Right ventricle myocardium inferior (tissue), 1 donor: ENCODE measurements at regions of chr1 and their contacts with region 1.

Region 1: GRCh38 chr1:198465201-198466144 is 75.0 kb downstream of the ATP6V1G3 start:
- DNase-seq: no peak
- ATAC-seq: no peak

Region 2: GRCh38 chr1:197902454-197903195 is 562.8 kb before region 1 on chr1 and contains the start of gene C1orf53:
- intact Hi-C with region 1: loop called (anchors 10 kb)
- DNase-seq: peak; percentile 92
- ATAC-seq: peak; percentile 100
- total RNA-seq, gene C1orf53: 4.9 TPM

Region 3: DNA sequence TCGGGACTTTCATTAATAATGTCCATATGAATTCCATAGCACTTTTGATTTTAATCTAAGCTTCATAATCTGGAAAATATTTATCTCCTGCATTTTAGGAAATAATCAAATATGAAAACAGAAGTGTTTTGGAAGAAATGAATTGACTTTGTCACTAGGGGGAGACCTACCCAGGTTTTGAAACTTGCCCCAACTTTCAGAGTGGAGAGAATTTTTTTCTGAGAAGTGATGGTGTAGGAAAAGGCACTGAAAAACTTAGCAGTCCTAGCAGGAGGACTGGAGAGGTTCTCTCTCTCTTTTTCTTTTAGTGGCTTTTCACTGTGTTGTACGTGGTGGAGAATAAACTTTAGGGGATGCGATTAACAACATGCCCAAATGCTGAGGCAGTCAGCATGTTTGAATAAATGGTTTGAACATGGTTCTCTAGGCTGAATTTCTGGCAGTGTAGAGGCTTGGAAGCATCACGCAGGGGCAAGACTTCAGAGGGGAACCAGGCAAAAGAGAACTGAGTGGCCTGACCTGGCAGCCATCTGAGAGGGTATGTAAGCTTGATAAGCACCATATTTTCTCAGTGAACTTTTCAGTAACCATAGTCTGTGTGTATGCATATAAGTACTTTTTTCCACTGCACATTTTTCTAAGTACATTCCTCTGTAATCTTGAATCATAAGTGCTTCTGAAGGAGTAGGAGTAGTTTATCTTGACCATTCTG is 377.0 kb before region 1 on chr1:
- intact Hi-C with region 1: loop called (anchors 2 kb)
- DNase-seq: no peak
- ATAC-seq: no peak

Region 4: DNA sequence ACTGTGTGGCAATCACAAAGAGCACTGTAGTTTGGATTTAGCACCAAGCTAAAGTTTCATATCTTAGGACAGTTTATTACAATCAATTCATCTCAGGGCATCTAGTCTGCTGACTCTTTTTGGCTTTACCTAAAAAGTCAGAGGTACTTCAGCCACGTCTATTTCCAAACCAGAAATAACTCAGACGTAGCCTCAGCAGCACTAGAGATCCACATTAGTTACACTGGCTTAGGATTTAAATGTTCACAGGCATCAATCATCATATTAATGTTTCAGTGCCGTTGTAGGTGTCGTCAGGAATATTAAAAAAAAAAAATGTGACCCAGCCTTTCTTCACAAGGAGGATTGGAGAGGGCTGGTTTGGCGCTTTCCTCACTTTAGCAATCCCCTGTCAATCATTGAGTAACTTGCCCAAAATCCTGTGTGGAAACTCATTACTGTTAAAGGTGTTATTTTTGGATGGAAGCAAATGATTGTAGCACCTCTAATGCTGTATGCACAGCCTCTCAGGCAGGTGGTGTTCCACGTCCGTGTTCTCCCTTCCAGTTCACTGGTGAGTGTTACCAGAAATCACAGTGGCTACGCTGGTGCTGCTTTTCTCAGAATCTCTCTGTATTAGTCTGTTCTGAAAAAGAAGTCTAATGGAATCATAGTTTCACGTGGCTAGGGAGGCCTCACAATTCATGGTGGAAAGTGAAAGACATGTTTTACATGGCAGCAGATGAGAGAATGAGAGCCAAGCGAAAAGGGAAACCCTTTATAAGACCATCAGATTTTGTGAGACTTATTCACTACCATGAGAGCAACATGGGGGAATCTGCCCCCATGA is 263.3 kb before region 1 on chr1:
- intact Hi-C with region 1: loop called (anchors 10 kb)
- DNase-seq: no peak
- ATAC-seq: no peak

Region 5: DNA sequence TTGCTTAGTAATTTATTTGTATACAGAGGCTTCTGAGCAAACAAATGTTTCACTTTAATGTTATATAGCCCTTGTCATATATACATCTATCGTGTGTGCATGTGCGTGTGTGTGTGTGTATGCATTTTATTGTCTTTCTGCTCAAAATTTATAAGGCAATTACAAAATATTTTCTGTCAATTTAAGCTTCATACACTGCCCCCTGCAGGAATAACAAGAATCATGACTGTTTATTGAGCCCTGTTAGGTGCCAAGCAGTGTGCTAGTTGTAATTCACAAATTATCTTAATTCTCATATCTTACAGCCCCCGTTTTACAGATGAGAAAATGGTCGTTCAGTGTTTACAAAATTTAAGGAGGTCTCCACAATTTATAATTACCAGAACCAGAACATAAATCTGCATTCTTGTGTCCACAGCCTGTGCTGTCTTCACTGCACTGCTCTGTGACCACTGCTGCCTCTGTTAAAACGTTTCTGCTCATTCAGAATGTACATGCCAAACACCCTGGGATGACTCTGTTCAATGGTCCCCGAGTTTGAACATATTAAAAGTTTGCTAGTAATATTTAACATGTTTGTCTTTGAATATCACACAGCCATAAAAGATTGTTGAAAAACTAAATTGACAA is 106.3 kb before region 1 on chr1:
- intact Hi-C with region 1: loop called (anchors 10 kb)
- DNase-seq: no peak
- ATAC-seq: no peak

Region 6: GRCh38 chr1:198423673-198424072 is 41.8 kb before region 1 on chr1:
- intact Hi-C with region 1: no loop called
- DNase-seq: no peak
- ATAC-seq: no peak